HEK293 (cell line): ENCODE measurements at regions of chr10 and their contacts with region 1.

Region 1: DNA sequence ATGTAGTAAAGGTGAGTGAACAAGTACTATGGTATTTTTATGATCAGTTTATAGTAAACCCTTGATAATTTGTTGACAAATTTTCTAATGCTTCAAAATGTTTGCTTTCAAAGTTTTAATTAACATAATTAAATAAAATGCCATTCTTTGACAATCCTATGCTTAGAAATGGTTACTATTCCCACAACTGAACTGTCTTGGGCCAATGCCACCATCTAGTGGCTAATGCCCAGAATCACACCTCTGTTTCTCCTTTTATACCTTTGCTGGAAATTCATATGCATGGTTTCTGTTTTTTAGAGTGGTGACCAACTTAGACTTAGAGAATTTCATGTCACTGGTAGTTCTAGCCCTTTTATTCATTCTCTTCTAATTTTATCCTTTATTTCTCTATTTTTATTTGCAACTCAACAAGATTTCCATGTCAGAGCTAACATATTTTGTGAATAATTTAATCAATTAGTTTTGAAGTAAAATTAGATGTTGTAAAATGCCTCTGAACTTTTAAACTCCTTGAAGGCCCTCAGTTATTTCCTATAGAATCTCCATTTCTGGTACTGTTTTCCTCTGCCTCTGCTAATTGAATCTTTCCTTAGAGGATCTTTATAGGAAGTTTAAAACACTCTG is 31.1 kb downstream of the PCGF5 start:
- H3K4me3 ChIP-seq: no peak overlapping the region
- H3K27ac ChIP-seq: no peak overlapping the region
- H3K4me1 ChIP-seq: peaks cover 8% of the 10 kb centered on the region; the same call in 1 of the 2 replicates
- CTCF ChIP-seq: peak; percentile 36; the same call in 1 of the 2 replicates

Region 2: DNA sequence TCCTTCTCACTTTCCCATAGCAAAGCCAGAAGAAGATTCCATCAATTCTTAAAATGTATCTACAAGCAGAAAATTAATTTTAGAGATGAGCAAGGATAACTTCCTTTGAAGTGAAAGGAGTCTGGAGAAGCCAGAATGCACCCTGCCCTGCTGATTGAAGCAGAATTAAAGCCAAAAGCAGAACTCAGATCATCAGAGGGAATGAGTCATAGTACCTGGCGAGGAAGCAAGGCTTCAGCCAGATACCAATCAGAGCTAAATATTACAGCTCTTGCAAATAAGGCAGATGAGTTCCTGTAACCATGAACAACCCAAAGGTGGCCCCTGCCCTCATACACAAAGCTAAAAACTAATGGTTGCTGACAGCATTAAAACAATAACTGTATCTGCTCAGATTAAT is 404.1 kb before region 1 on chr10:
- CTCF ChIA-PET with region 1: no interaction called
- POLR2A ChIA-PET with region 1: no interaction called
- H3K4me3 ChIP-seq: no peak overlapping the region
- H3K27ac ChIP-seq: no peak overlapping the region
- H3K4me1 ChIP-seq: no peaks in the 10 kb centered on the region
- CTCF ChIP-seq: no peak

Region 3: GRCh38 chr10:90879062-90879461 is 372.5 kb before region 1 on chr10:
- CTCF ChIA-PET with region 1: interaction called, 24 read pairs
- POLR2A ChIA-PET with region 1: no interaction called
- H3K4me3 ChIP-seq: no peak overlapping the region
- H3K27ac ChIP-seq: no peak overlapping the region
- H3K4me1 ChIP-seq: no peaks in the 10 kb centered on the region
- CTCF ChIP-seq: no peak

Region 4: DNA sequence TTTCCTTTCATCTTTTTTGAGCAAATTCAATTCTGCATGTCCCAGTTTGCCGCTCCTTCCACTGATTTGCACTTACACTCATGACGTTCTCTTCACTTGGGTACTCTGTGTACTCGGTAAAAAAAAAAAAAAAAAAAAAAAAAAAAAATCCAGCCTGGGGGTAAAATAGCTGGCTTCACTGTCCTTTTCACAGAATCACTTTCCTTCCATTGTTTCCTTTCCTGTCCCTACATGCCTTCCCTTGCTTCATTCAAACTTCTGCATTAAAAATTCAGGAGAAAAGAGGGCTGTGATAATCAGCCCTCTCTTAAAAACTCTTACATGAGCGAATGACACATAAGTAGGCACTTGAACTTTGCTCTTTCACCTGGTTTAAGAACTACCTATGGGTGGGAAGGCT is 339.4 kb before region 1 on chr10:
- CTCF ChIA-PET with region 1: interaction called, 57 read pairs
- POLR2A ChIA-PET with region 1: interaction called, 6 read pairs
- H3K4me3 ChIP-seq: no peak overlapping the region
- H3K27ac ChIP-seq: no peak overlapping the region
- H3K4me1 ChIP-seq: no peaks in the 10 kb centered on the region
- CTCF ChIP-seq: no peak

Region 5: GRCh38 chr10:90920986-90921666 is 330.4 kb before region 1 on chr10 and contains the start of gene ANKRD1:
- CTCF ChIA-PET with region 1: interaction called, 13 read pairs
- POLR2A ChIA-PET with region 1: no interaction called
- H3K4me3 ChIP-seq: peak within 1 kb of the TSS; percentile 37
- H3K27ac ChIP-seq: no peak within 1 kb of the TSS
- H3K4me1 ChIP-seq: peaks cover 6% of the 10 kb centered on the region; the same call in 1 of the 2 replicates
- CTCF ChIP-seq: no peak

Region 6: GRCh38 chr10:91043173-91043910 is 208.2 kb before region 1 on chr10:
- CTCF ChIA-PET with region 1: interaction called, 48 read pairs
- POLR2A ChIA-PET with region 1: no interaction called
- H3K4me3 ChIP-seq: no peak overlapping the region
- H3K27ac ChIP-seq: no peak overlapping the region
- H3K4me1 ChIP-seq: no peaks in the 10 kb centered on the region
- CTCF ChIP-seq: peak; percentile 60; the same call in 1 of the 2 replicates

Region 7: DNA sequence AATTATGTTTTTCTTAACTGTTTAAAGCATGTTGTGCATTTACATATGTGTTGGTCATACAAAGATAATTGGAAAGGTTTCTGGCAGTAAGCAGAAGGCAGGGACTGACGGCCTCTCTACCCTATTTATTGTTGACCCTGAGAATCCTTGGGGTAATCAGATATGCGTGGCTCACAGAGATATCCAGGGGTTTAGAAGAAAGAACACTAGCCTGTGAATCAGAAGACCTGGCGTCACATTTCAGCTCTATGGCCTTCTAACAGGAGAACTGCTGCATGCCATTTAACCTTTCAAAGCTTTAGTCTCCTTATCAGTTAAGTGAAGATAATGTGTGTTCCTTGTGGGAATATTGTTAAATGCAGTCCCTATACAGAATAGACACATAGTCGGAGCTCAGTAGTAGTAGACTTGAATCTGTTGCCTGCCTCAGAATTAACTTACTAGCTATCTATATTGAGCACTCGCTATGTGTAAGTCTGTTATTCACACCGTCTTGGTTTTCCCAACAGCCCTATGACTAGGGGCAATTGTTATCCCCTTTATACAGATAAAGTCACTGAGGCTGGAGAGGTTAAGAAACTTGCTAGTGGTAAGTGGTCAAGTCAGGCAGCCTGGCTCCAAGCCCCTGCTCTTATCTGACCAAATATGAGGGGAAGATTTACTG is 201.0 kb before region 1 on chr10:
- CTCF ChIA-PET with region 1: interaction called, 16 read pairs
- POLR2A ChIA-PET with region 1: no interaction called
- H3K4me3 ChIP-seq: no peak overlapping the region
- H3K27ac ChIP-seq: no peak overlapping the region
- H3K4me1 ChIP-seq: 0 out of 2 replicates have a peak, but pooled peaks cover 5% of the 10 kb centered on the region
- CTCF ChIP-seq: no peak

Region 8: GRCh38 chr10:91088300-91089140 is 163.0 kb before region 1 on chr10:
- CTCF ChIA-PET with region 1: interaction called, 41 read pairs
- POLR2A ChIA-PET with region 1: no interaction called
- H3K4me3 ChIP-seq: no peak overlapping the region
- H3K27ac ChIP-seq: no peak overlapping the region
- H3K4me1 ChIP-seq: no peaks in the 10 kb centered on the region
- CTCF ChIP-seq: no peak

Region 9: GRCh38 chr10:91127341-91128082 is 124.0 kb before region 1 on chr10:
- CTCF ChIA-PET with region 1: no interaction called
- POLR2A ChIA-PET with region 1: no interaction called
- H3K4me3 ChIP-seq: no peak overlapping the region
- H3K27ac ChIP-seq: no peak overlapping the region
- H3K4me1 ChIP-seq: no peaks in the 10 kb centered on the region
- CTCF ChIP-seq: no peak

Region 10: DNA sequence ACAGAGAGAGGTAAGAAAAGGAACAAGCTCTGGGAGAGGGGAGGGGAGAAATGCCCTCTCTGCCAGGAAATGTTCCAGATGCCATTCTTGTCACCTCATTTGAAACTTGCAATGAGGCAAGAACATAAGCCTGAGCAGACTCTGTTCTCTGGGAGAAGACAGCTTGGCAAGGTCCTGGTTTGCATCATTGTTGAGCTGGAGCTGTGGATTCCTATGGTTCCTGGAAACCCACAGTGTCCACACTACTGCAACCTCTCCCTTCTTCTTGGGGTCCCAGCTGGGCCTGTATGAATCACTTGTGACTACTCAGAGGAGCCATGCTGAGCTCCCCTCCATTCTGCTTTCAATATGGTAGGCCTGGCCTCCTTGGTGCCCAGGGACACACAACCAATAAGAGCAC is 97.8 kb after region 1 on chr10:
- CTCF ChIA-PET with region 1: no interaction called
- POLR2A ChIA-PET with region 1: no interaction called
- H3K4me3 ChIP-seq: no peak overlapping the region
- H3K27ac ChIP-seq: no peak overlapping the region
- H3K4me1 ChIP-seq: no peaks in the 10 kb centered on the region
- CTCF ChIP-seq: no peak

Region 11: DNA sequence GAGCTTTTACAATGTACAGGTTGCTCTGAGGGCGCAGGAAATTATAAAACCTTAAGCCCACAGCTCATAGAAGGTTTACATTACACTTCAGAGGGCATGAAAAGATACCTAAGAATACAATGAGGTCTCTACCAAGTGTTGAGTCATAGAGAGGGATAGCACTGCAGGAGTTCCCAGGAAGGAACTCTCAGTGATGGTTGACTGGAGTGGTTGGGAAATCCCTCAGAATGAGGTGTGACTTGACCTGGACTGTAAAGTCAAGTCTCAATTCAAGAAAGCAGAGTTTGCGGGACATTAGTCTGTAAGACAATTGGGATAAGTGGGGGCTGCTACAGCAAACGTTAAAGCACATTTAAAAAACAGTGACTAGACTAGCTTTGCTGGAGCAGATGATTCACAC is 568.6 kb after region 1 on chr10:
- CTCF ChIA-PET with region 1: no interaction called
- POLR2A ChIA-PET with region 1: no interaction called
- H3K4me3 ChIP-seq: no peak overlapping the region
- H3K27ac ChIP-seq: no peak overlapping the region
- H3K4me1 ChIP-seq: no peaks in the 10 kb centered on the region
- CTCF ChIP-seq: no peak